CD8-positive, alpha-beta T cell (primary cell): ENCODE measurements at regions of chr2 and their contacts with region 1.

Region 1: DNA sequence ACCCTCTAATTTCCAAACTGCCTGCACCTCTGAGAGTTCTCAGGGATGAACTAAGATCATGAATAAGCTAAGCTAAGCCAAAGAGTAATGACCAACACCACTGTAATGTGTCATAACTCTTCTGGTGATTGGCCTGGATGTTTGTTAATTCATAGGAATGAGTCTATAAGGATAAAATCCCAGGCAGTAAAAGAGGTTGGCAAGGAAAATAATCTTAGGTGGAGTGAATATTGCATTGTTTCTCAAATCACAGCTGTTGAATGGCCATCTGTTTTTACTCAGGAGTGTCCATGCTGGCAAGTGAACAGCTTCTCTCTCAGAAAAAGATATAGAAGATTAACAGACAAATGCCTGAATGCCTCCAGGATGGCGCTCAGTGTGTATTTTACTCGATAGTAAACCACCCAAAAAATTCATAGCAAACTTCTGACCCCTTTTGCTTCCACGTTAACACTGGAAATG is 60.8 kb upstream of the GLS start:
- DNase-seq: no peak
- ATAC-seq: no peak
- H3K4me3 ChIP-seq: no peak overlapping the region
- H3K4me3 Mint-ChIP-seq: no peak overlapping the region
- H3K27ac ChIP-seq: no peak overlapping the region
- H3K27ac Mint-ChIP-seq: no peak overlapping the region
- H3K4me1 ChIP-seq: no peaks in the 10 kb centered on the region
- H3K4me1 Mint-ChIP-seq: no peaks in the 10 kb centered on the region
- H3K27me3 ChIP-seq: no peaks in the 10 kb centered on the region
- H3K27me3 Mint-ChIP-seq: peaks cover 2% of the 10 kb centered on the region
- CTCF ChIP-seq: no peak

Region 2: DNA sequence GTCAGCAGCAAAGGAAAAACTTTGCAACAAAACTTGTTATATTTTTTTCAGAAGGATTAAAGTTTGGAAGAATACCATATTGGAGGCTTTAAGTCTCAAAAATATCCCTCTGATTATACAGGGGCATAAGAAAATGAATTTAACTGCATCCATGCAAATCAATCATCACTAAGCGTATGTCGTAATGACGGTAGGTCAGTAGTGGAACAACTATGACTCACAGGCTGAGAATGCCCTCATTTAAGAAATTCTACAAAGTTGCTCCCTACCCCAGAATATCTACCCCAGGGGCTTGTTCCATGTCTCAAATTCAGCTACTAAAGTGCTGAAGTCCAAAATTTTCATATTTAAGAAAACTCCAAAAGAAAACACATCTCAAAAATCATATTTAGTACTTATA is 183.5 kb before region 1 on chr2:
- CTCF ChIA-PET with region 1: no interaction called
- POLR2A ChIA-PET with region 1: no interaction called
- intact Hi-C with region 1: loop called in 1 of 2 experiments (anchors 10 kb)
- DNase-seq: no peak
- ATAC-seq: no peak
- H3K4me3 ChIP-seq: no peak overlapping the region
- H3K4me3 Mint-ChIP-seq: no peak overlapping the region
- H3K27ac ChIP-seq: no peak overlapping the region
- H3K27ac Mint-ChIP-seq: no peak overlapping the region
- H3K4me1 ChIP-seq: no peaks in the 10 kb centered on the region
- H3K4me1 Mint-ChIP-seq: no peaks in the 10 kb centered on the region
- H3K27me3 ChIP-seq: no peaks in the 10 kb centered on the region
- H3K27me3 Mint-ChIP-seq: no peaks in the 10 kb centered on the region
- CTCF ChIP-seq: no peak